Panc1 (cell line): ENCODE measurements at regions of chr13 and their contacts with region 1.

Region 1: GRCh38 chr13:85879014-85879413 is 79.8 kb upstream of the SLITRK6 start:
- DNase-seq: no peak
- ATAC-seq: no peak
- H3K4me3 ChIP-seq: no peak overlapping the region
- H3K27ac ChIP-seq: no peak overlapping the region
- H3K4me1 ChIP-seq: no peaks in the 10 kb centered on the region
- H3K27me3 ChIP-seq: no peaks in the 10 kb centered on the region
- CTCF ChIP-seq: no peak; the same call in 1 of the 2 replicates

Region 2: GRCh38 chr13:85896516-85897450 is 17.8 kb after region 1 on chr13:
- CTCF ChIA-PET with region 1: no interaction called
- POLR2A ChIA-PET with region 1: no interaction called
- in situ Hi-C with region 1: no loop called
- intact Hi-C with region 1: loop called (anchors 1 kb)
- DNase-seq: no peak
- ATAC-seq: no peak
- H3K4me3 ChIP-seq: no peak overlapping the region
- H3K27ac ChIP-seq: no peak overlapping the region
- H3K4me1 ChIP-seq: no peaks in the 10 kb centered on the region
- H3K27me3 ChIP-seq: no peaks in the 10 kb centered on the region
- CTCF ChIP-seq: no peak; the same call in 1 of the 2 replicates